ENCODE measurements at regions of chr2 and their contacts with region 1.

Region 1: DNA sequence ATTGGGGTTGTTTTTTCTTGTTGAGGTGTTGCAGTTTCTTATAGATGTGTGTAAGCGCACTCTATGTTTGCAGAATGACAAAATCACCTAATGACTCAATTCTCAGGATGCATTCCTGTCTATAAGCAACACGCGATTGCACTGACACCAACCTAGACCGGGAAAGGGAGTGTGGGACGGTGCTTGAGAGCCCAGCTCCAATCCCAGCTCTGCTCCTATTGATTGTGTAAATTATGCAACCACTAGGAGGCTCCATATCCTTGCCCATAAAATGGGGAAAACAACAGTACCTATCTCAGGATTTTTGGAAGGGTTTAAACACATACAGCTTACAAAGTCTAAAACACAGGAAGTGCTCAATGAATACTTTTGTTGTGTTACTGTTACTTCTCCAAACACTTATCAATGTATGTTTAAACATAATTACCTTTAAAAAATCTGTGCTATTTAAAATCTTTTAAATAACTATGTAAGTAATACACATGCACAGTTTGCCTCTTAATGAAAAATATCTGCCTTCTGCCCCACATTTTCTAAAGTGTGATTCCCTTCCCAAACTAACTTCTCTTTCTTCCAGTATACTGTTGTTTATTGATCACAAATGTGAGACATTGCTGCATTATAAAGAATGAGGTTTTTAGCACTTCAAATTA is 132.5 kb downstream of the SPHKAP start:
- DNase-seq: peak; percentile 89
- H3K4me3 Mint-ChIP-seq: no peak overlapping the region
- H3K27ac Mint-ChIP-seq: no peak overlapping the region
- H3K4me1 Mint-ChIP-seq: peaks cover 7% of the 10 kb centered on the region
- H3K27me3 Mint-ChIP-seq: peaks cover 30% of the 10 kb centered on the region
- CTCF ChIP-seq: peak; percentile 47

Region 2: DNA sequence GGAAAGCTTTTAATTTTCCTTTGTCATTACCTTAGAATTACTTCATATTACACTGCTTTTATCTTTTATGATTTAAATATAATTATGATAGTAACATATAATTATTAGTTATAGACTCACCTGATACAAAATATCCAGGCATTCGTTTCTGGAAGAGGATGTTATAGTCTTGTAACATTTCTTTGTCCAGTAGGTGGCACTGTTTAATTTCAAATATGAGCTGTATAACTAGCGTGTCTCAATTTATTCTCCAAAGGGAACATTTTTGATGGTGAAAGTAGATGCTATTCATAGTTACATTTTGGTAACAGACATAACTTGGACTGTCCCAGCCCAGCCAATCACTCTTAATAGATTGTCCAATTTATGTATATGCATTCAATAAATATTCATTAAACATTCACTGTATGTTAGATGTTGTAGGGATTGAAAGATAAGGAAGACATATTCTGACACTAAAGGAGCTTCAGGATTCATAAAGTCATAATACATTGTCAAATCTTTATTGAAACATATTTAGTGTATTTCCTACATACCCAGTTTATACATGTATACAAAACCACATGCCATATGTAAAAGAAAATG is 158.4 kb before region 1 on chr2:
- CTCF ChIA-PET with region 1: interaction called, 10 read pairs
- POLR2A ChIA-PET with region 1: no interaction called
- intact Hi-C with region 1: loop called (anchors 5 kb)
- DNase-seq: peak; percentile 77
- H3K4me3 Mint-ChIP-seq: no peak overlapping the region
- H3K27ac Mint-ChIP-seq: no peak overlapping the region
- H3K4me1 Mint-ChIP-seq: peaks cover 13% of the 10 kb centered on the region
- H3K27me3 Mint-ChIP-seq: no peaks in the 10 kb centered on the region
- CTCF ChIP-seq: peak; percentile 40

Region 3: DNA sequence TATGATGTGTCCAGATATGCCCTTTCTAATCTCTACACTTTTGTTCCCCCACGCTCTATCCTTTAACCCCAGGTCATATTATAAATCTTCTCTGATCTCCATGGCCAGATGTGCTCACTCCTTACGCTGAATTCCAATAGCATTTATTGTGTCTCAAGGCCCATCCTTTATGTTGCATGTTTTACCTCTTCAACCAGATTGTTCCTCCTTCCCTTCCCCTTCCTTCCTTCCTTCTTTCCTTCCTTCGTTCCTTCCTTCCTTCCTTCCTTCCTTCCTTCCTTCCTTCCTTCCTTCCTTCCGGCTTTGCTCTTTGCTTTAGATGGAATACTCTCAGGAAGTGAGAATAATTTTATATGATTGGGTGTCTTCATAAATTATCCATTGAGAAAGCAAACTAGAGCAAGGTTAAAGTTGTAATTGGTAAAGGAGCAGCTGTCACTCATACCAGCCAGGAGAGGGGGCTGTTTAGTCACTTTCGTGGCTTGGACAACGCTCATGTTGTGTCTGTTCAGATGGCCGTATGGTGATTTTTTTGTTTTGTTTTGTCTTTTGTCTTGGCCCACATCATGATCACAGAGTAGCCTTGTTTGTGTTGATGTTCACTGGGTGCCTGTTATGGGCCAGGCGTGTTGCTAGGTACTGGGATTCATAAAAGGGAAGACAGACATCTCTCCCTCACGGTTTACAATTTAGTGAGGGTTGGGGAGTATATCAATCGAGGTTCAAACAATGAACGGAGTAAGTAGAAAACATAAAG is 109.5 kb before region 1 on chr2:
- CTCF ChIA-PET with region 1: no interaction called
- POLR2A ChIA-PET with region 1: no interaction called
- intact Hi-C with region 1: loop called (anchors 5 kb)
- DNase-seq: peak; percentile 78
- H3K4me3 Mint-ChIP-seq: no peak overlapping the region
- H3K27ac Mint-ChIP-seq: no peak overlapping the region
- H3K4me1 Mint-ChIP-seq: peaks cover 12% of the 10 kb centered on the region
- H3K27me3 Mint-ChIP-seq: no peaks in the 10 kb centered on the region
- CTCF ChIP-seq: peak; percentile 64

Region 4: DNA sequence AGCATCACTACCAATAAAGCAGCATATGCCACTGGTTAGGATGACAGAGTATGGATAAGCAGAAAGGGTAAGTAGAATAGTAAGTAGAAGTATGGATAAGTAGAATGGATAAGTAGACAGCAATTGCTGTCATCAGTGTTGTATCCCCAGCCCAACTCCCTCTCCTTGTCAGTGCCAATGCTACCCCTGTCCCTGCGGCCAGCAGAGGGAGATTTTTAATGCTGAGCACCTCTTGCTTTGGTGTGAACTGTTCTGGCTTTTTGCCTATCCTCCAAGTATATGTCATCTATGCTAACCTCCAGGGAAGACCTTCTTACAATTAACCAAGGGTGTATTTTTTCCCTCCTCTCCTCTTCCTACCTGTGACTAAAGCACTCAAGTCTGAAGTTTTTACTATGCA is 269.3 kb after region 1 on chr2:
- CTCF ChIA-PET with region 1: no interaction called
- POLR2A ChIA-PET with region 1: no interaction called
- intact Hi-C with region 1: loop called (anchors 10 kb)
- DNase-seq: peak; percentile 73
- H3K4me3 Mint-ChIP-seq: no peak overlapping the region
- H3K27ac Mint-ChIP-seq: no peak overlapping the region
- H3K4me1 Mint-ChIP-seq: no peaks in the 10 kb centered on the region
- H3K27me3 Mint-ChIP-seq: peaks cover 24% of the 10 kb centered on the region
- CTCF ChIP-seq: peak; percentile 58

Region 5: DNA sequence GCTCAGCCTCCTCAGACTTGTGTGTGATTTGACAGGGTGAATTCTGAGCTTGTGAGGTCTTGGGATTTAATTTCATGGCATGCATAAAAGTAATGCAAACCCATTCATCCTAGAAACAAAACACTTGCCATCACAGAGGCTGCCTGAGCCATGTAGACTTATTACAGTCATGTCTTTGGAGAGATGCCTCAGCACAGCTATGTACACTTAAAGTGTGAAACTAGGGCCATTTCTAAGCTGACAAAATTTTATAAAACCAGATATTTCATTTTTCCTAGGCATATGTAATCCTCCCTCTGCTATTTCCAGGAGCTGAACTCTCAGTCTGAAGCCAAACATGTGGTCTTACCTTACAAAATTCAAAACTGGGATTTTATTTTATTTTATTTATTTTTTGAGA is 454.8 kb after region 1 on chr2:
- CTCF ChIA-PET with region 1: no interaction called
- POLR2A ChIA-PET with region 1: no interaction called
- intact Hi-C with region 1: no loop called
- DNase-seq: no peak
- H3K4me3 Mint-ChIP-seq: no peak overlapping the region
- H3K27ac Mint-ChIP-seq: no peak overlapping the region
- H3K4me1 Mint-ChIP-seq: no peaks in the 10 kb centered on the region
- H3K27me3 Mint-ChIP-seq: peaks cover 16% of the 10 kb centered on the region
- CTCF ChIP-seq: no peak

Measured in MCF 10A (cell line).